ENCODE measurements at regions of chr19 and their contacts with region 1.

Region 1: DNA sequence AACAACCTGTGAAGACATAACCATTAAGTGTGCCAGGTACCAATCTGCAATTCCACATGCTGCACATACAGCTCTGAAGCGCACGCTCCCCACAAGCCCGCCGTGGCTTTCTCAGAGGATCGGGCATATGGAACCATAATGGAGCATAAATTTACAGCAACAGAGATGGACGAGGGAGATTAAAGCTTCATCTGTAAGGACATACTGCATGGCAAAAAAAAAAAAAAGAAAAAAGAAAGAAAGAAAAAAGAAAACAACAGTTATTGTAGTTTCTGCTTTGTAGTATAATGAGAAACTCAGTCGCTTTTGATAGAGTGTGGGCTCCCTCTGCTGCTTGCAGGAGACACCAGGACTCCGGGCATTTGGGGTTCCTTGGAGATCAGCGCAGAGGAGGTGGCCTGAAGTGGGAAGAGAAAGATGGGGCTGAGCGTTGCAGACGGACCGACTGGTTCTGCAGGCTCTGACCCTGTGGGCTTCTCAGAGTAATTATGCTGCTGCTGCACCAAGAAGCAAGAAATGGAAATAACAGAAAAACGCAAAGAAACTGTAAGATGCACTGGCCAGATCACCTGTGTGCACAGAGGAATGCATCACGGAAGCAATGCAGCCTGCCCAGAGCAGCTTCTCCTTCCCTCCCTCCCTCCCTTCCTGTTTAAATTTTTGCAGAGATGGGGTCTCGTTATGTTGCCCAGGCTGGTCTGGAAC is 10.8 kb upstream of the PDCD5 start:
- DNase-seq: peak; percentile 72
- ATAC-seq: peak; percentile 69
- H3K4me3 Mint-ChIP-seq: no peak overlapping the region
- H3K27ac Mint-ChIP-seq: no peak overlapping the region
- H3K4me1 Mint-ChIP-seq: peaks cover 10% of the 10 kb centered on the region
- H3K27me3 Mint-ChIP-seq: peaks cover 10% of the 10 kb centered on the region

Region 2: GRCh38 chr19:32287811-32288227 is 282.4 kb before region 1 on chr19:
- CTCF ChIA-PET with region 1: no interaction called
- POLR2A ChIA-PET with region 1: no interaction called
- intact Hi-C with region 1: loop called in 1 of 2 experiments (anchors 1 kb)
- DNase-seq: peak; percentile 56
- ATAC-seq: no peak
- H3K4me3 Mint-ChIP-seq: no peak overlapping the region
- H3K27ac Mint-ChIP-seq: no peak overlapping the region
- H3K4me1 Mint-ChIP-seq: no peaks in the 10 kb centered on the region
- H3K27me3 Mint-ChIP-seq: peaks cover 12% of the 10 kb centered on the region

Region 3: GRCh38 chr19:32339988-32340874 is 230.0 kb before region 1 on chr19:
- CTCF ChIA-PET with region 1: interaction called, 3 read pairs
- POLR2A ChIA-PET with region 1: interaction called, 3 read pairs
- intact Hi-C with region 1: loop called (anchors 1 kb)
- DNase-seq: peak; percentile 67
- ATAC-seq: peak; percentile 85
- H3K4me3 Mint-ChIP-seq: no peak overlapping the region
- H3K27ac Mint-ChIP-seq: no peak overlapping the region
- H3K4me1 Mint-ChIP-seq: peaks cover 2% of the 10 kb centered on the region
- H3K27me3 Mint-ChIP-seq: peaks cover 2% of the 10 kb centered on the region

Region 4: GRCh38 chr19:32464279-32464678 is 106.0 kb before region 1 on chr19:
- CTCF ChIA-PET with region 1: interaction called, 3 read pairs
- POLR2A ChIA-PET with region 1: no interaction called
- intact Hi-C with region 1: loop called in 1 of 2 experiments (anchors 5 kb)
- DNase-seq: no peak
- ATAC-seq: no peak
- H3K4me3 Mint-ChIP-seq: no peak overlapping the region
- H3K27ac Mint-ChIP-seq: no peak overlapping the region
- H3K4me1 Mint-ChIP-seq: peaks cover under 1% of the 10 kb centered on the region
- H3K27me3 Mint-ChIP-seq: no peaks in the 10 kb centered on the region